MCF 10A (cell line): ENCODE measurements at regions of chr6 and their contacts with region 1.

Region 1: GRCh38 chr6:16761471-16762267 is 409 bp upstream of the ATXN1 start:
- DNase-seq: peak; percentile 83
- H3K4me3 Mint-ChIP-seq: peak overlapping the region; percentile 90
- H3K27ac Mint-ChIP-seq: peak overlapping the region; percentile 77
- H3K4me1 Mint-ChIP-seq: peaks cover 16% of the 10 kb centered on the region
- H3K27me3 Mint-ChIP-seq: no peaks in the 10 kb centered on the region
- CTCF ChIP-seq: peak; percentile 7

Region 2: GRCh38 chr6:16676978-16677377 is 84.7 kb before region 1 on chr6:
- CTCF ChIA-PET with region 1: interaction called, 7 read pairs
- POLR2A ChIA-PET with region 1: interaction called, 49 read pairs
- intact Hi-C with region 1: loop called (anchors 2 kb)
- DNase-seq: peak; percentile 61
- H3K4me3 Mint-ChIP-seq: peak overlapping the region; percentile 24
- H3K27ac Mint-ChIP-seq: peak overlapping the region; percentile 85
- H3K4me1 Mint-ChIP-seq: peaks cover 34% of the 10 kb centered on the region
- H3K27me3 Mint-ChIP-seq: no peaks in the 10 kb centered on the region
- CTCF ChIP-seq: no peak

Region 3: DNA sequence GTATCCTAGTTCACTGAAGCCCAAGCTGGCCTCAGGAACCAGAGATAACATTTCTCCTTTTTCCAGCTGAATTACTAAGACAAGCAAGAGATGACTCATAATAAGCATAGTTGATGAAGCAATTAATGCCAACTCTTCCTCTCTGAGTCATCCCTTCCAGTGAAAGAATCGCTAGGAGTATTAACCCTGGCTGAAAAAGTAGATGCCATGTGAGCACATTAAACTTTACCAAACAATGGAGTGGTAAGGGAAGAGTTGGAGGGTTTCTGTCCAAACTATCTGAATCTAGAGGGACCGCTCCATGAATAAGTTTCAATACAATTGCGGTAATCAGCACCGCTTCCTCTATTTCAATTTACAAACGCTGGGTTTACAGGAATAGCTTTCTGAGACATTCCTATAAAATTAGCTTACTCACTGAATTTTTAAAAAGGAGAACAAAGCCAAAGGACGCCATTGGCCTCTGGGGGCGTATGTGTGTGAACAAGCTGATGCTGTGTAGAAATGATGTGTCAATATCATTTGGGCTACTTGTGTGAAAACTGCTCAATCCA is 48.7 kb before region 1 on chr6:
- CTCF ChIA-PET with region 1: interaction called, 8 read pairs
- POLR2A ChIA-PET with region 1: interaction called, 38 read pairs
- intact Hi-C with region 1: loop called (anchors 1 kb)
- DNase-seq: peak; percentile 95
- H3K4me3 Mint-ChIP-seq: peak overlapping the region; percentile 63
- H3K27ac Mint-ChIP-seq: peak overlapping the region; percentile 96
- H3K4me1 Mint-ChIP-seq: peaks cover 28% of the 10 kb centered on the region
- H3K27me3 Mint-ChIP-seq: no peaks in the 10 kb centered on the region
- CTCF ChIP-seq: no peak

Region 4: GRCh38 chr6:16741112-16742016 is 20.3 kb before region 1 on chr6:
- CTCF ChIA-PET with region 1: interaction called, 22 read pairs
- POLR2A ChIA-PET with region 1: interaction called, 21 read pairs
- intact Hi-C with region 1: loop called (anchors 1 kb)
- DNase-seq: no peak
- H3K4me3 Mint-ChIP-seq: no peak overlapping the region
- H3K27ac Mint-ChIP-seq: no peak overlapping the region
- H3K4me1 Mint-ChIP-seq: peaks cover 27% of the 10 kb centered on the region
- H3K27me3 Mint-ChIP-seq: no peaks in the 10 kb centered on the region
- CTCF ChIP-seq: no peak

Region 5: DNA sequence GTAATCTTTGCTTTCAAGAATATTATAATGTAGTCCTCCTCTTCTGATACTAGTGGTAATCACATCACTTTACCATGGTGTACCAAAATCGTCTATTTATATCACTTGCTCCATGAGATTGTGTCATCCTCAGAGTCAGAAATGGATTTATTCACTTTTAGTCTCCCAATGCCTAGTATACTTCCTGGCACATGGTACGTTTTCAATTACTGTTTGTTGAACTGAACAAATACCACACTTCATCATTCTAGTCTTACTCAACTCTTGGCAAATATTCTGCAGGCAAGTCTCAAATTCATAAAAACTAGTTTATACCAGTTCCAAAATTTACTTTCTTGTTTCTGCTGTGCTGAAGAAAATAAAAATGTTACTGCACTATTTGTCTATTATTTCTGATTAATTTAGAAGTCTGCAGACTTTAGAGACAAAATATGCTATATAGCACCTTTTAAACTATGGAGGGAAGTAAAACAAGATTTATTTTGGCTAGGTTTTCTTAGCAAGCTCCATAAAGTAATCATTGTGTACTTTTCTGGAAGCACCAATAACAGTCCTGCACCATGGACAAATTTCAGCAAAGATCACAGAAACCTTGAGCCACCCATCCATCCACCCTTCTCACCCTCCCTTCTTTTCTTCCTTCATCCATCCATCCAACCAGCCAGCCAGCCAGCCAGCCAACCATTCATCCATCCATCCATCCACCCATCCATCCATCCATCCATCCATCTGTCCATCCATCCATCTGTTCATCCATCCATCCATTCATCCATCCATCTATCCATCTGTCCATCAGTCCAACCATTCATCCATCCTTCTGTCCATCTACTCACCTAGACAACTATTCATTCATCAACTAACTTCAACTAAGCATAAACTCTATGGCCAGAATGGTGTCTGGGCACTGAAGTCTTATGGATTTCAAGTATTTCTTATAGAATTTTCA is 238.1 kb after region 1 on chr6:
- CTCF ChIA-PET with region 1: interaction called, 12 read pairs
- POLR2A ChIA-PET with region 1: no interaction called
- intact Hi-C with region 1: no loop called
- DNase-seq: peak; percentile 35
- H3K4me3 Mint-ChIP-seq: no peak overlapping the region
- H3K27ac Mint-ChIP-seq: no peak overlapping the region
- H3K4me1 Mint-ChIP-seq: peaks cover 6% of the 10 kb centered on the region
- H3K27me3 Mint-ChIP-seq: peaks cover 10% of the 10 kb centered on the region
- CTCF ChIP-seq: no peak

Region 6: DNA sequence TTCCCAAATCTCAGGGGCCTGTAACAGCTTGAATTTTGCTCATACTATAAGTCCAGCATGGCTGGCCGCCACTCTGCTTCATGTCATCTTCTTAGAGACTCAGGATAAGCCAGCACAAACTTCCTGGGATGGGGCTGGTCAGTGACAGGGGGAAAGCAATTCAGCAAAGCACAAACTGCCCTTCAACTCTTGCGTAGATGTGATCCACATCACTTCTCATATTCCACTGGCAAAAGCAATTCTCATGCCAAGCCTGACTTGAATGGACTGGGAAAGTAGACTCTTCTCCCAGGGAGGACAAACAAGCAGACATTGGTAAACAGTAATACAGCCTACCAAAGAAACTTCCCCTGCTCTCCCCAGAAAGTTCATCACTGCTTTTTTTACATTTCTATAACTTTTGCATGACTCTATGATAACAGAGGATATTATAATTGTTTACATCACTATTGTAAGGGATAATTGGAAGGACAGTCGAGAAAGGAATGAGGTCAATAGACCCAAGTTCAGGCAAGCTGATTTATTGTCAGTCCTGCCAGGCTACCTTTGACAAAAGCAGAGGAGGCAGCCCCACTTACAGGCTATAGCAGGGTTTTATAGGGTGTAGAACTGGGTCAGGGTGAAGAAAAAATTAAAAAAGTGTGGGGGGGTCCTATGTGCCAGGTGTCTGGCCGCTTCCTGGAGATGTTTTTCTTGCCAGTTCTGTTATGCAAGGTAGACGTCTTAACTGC is 556.9 kb after region 1 on chr6:
- CTCF ChIA-PET with region 1: no interaction called
- POLR2A ChIA-PET with region 1: no interaction called
- intact Hi-C with region 1: no loop called
- DNase-seq: no peak
- H3K4me3 Mint-ChIP-seq: no peak overlapping the region
- H3K27ac Mint-ChIP-seq: no peak overlapping the region
- H3K4me1 Mint-ChIP-seq: no peaks in the 10 kb centered on the region
- H3K27me3 Mint-ChIP-seq: no peaks in the 10 kb centered on the region
- CTCF ChIP-seq: no peak